ENCODE measurements at regions of chr15 and their contacts with region 1.

Region 1: GRCh38 chr15:79596051-79596507 is 163.9 kb downstream of the MINAR1 start:
- H3K4me3 ChIP-seq: no peak overlapping the region
- H3K27ac ChIP-seq: no peak overlapping the region
- H3K4me1 ChIP-seq: no peaks in the 10 kb centered on the region
- CTCF ChIP-seq: peak; percentile 84

Region 2: DNA sequence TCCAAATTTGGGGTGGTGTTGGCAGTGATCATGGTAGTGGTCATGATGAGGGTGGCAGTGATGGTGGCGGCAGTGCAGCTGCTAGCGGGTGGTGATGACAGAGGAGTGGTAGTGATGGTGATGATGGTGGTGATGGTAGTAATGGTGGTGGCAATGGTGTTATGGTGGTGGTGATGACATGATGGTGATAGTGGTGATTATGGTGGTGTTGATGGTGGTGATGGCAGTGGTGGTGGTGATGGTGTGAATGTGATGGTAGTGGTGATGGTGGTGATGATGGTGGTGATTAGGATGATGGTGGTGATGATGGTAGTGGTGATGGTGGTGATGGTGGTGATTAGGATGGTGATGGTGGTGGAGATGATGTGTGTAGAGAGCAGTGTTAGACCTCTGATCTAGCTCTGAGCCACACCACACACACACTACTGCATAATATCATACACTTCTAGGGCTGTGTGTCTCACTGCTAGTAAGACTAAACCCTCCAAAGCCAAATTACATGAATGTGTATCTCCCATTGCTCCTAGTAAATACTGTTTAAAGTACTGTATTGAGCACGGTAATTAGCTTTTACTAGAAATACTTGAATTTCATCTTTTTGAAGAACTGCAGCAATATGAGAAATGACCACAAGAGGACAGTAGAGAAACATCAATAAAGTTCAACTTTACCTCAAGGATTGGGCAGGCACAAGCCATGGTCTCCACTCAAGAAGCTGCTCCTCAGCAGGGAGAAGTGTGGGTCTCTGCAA is 256.3 kb before region 1 on chr15:
- CTCF ChIA-PET with region 1: interaction called, 100 read pairs
- POLR2A ChIA-PET with region 1: interaction called, 4 read pairs
- H3K4me3 ChIP-seq: no peak overlapping the region
- H3K27ac ChIP-seq: no peak overlapping the region
- H3K4me1 ChIP-seq: no peaks in the 10 kb centered on the region
- CTCF ChIP-seq: peak; percentile 58; the same call in 1 of the 2 replicates

Region 3: GRCh38 chr15:79450648-79451047 is 145.4 kb before region 1 on chr15:
- CTCF ChIA-PET with region 1: interaction called, 54 read pairs
- POLR2A ChIA-PET with region 1: no interaction called
- H3K4me3 ChIP-seq: no peak overlapping the region
- H3K27ac ChIP-seq: no peak overlapping the region
- H3K4me1 ChIP-seq: no peaks in the 10 kb centered on the region
- CTCF ChIP-seq: no peak

Region 4: DNA sequence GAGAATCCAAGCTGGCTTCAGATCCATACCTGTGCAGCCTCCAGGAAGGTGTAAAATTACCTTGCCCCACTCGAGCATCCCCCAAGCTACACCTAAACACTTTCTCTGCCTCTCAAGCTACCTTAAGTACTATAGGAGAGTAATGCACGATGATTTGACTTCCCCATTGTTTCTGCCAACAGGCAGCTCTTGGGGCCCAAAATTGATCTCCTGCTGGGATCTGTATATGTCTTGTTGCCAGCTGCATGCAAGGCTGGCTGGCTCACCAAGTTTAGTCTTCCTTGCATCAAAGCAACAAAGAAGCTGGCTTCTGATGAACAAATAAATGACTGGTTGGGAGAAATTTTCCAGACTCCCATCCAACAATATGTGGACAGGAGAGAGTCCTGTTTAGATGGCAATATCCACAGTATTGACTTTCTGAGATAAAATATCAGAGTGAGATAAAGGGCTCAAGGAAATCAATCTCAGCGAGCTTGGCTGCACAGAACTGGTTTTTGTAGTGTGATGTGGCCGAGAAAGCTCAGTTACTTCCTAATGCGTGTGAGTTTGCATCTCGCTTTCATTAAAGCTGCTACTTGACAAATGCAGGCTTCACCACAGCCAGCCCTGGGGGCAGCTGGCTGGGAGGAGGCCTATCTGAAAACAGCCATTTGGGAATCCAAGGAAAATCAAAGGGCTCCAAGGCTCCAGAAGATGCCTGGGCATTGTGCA is 23.2 kb before region 1 on chr15:
- CTCF ChIA-PET with region 1: interaction called, 15 read pairs
- POLR2A ChIA-PET with region 1: no interaction called
- H3K4me3 ChIP-seq: no peak overlapping the region
- H3K27ac ChIP-seq: no peak overlapping the region
- H3K4me1 ChIP-seq: no peaks in the 10 kb centered on the region
- CTCF ChIP-seq: no peak

Region 5: GRCh38 chr15:79608066-79608864 is 12.2 kb after region 1 on chr15:
- CTCF ChIA-PET with region 1: interaction called, 28 read pairs
- POLR2A ChIA-PET with region 1: no interaction called
- H3K4me3 ChIP-seq: no peak overlapping the region
- H3K27ac ChIP-seq: no peak overlapping the region
- H3K4me1 ChIP-seq: no peaks in the 10 kb centered on the region
- CTCF ChIP-seq: no peak

Region 6: GRCh38 chr15:79623490-79623889 is 27.4 kb after region 1 on chr15:
- CTCF ChIA-PET with region 1: interaction called, 11 read pairs
- POLR2A ChIA-PET with region 1: no interaction called
- H3K4me3 ChIP-seq: no peak overlapping the region
- H3K27ac ChIP-seq: no peak overlapping the region
- H3K4me1 ChIP-seq: no peaks in the 10 kb centered on the region
- CTCF ChIP-seq: no peak

Region 7: GRCh38 chr15:79728867-79729266 is 132.8 kb after region 1 on chr15:
- CTCF ChIA-PET with region 1: no interaction called
- POLR2A ChIA-PET with region 1: no interaction called
- H3K4me3 ChIP-seq: no peak overlapping the region
- H3K27ac ChIP-seq: no peak overlapping the region
- H3K4me1 ChIP-seq: no peaks in the 10 kb centered on the region
- CTCF ChIP-seq: no peak

Region 8: GRCh38 chr15:79853458-79854328 is 257.6 kb after region 1 on chr15:
- CTCF ChIA-PET with region 1: interaction called, 31 read pairs
- POLR2A ChIA-PET with region 1: no interaction called
- H3K4me3 ChIP-seq: no peak overlapping the region
- H3K27ac ChIP-seq: no peak overlapping the region
- H3K4me1 ChIP-seq: no peaks in the 10 kb centered on the region
- CTCF ChIP-seq: peak; percentile 74

Region 9: DNA sequence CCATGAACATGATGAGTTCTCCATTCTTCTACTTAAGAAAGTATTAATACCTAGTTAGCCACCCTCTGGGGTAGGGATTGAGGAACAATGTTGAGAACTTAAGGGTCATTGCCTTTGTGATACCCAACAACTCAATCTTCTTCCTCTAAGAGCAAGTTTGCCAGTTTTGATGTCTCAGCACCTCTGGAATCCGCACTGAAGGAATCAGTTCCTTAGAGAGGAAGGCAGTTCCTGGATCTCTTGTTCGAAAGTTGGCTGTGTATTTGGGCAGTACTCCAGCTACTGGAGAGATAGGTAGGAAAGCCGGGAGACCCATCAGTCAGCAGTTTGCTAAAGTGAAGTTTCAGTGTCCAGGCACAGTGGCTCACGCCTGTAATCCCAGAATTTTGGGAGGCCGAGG is 336.4 kb after region 1 on chr15:
- CTCF ChIA-PET with region 1: no interaction called
- POLR2A ChIA-PET with region 1: no interaction called
- H3K4me3 ChIP-seq: no peak overlapping the region
- H3K27ac ChIP-seq: no peak overlapping the region
- H3K4me1 ChIP-seq: no peaks in the 10 kb centered on the region
- CTCF ChIP-seq: no peak

Measured in HEK293 (cell line).